RWPE1 (cell line): ENCODE measurements at regions of chr20 and their contacts with region 1.

Region 1: GRCh38 chr20:12925214-12925755 is 83.5 kb upstream of the SPTLC3 start:
- DNase-seq: peak; percentile 86
- H3K27ac ChIP-seq: no peak overlapping the region
- CTCF ChIP-seq: peak; percentile 95

Region 2: DNA sequence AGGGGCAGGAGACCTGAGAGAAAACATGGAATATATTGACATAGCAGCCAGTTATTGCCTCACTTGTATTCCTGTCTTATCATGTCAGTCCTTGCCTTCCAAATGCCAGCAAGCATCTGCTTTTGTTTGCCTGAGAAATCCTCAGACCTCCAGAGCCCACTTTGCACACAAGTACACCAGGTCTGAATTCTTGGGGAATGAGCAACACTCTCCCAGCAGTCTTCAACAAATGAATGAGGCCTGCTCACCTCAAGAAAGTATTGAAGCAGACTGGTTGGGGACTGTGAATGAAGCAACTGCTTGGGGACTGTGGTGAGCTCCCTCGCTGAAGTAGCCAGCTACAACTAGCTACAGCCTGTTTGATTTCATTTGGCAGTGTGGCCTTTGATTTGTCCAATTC is 89.3 kb before region 1 on chr20:
- CTCF ChIA-PET with region 1: no interaction called
- POLR2A ChIA-PET with region 1: no interaction called
- DNase-seq: no peak
- H3K27ac ChIP-seq: no peak overlapping the region
- CTCF ChIP-seq: no peak

Region 3: GRCh38 chr20:12847872-12848271 is 77.4 kb before region 1 on chr20:
- CTCF ChIA-PET with region 1: no interaction called
- POLR2A ChIA-PET with region 1: no interaction called
- DNase-seq: peak; percentile 2
- H3K27ac ChIP-seq: no peak overlapping the region
- CTCF ChIP-seq: no peak

Region 4: GRCh38 chr20:12970372-12970821 is 45.1 kb after region 1 on chr20:
- CTCF ChIA-PET with region 1: interaction called, 12 read pairs
- POLR2A ChIA-PET with region 1: no interaction called
- DNase-seq: peak; percentile 53
- H3K27ac ChIP-seq: no peak overlapping the region
- CTCF ChIP-seq: peak; percentile 74

Region 5: DNA sequence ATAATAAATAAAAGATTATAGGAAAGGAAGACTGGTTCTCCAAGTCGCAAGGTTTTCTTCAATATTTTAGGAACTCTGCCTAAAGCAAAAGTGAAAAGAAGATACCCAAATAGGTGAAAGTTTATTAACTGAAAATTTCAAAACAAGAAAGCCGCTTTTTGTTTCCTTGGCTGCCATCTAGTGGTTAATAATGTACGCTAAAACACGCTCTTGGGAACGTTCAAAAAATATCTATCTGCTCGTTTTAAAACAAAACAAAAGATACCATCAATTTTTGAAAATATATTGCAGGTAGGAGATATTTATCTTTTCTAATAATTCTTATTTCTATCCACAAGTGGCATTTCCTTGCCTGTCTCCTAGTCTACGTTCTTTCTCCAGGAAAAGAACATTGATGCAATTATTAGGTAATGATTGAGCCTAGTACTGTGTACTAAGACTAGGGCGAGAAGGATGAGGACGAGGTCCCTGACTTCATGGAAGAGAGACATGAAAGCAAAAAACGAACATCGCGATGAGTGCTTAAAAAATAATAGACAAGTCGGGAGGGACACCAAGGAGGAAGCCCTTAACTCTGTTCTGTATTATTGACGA is 180.7 kb after region 1 on chr20:
- CTCF ChIA-PET with region 1: interaction called, 12 read pairs
- POLR2A ChIA-PET with region 1: no interaction called
- DNase-seq: peak; percentile 28
- H3K27ac ChIP-seq: no peak overlapping the region
- CTCF ChIP-seq: peak; percentile 83

Region 6: GRCh38 chr20:13771853-13772453 is 846.7 kb after region 1 on chr20:
- CTCF ChIA-PET with region 1: interaction called, 11 read pairs
- POLR2A ChIA-PET with region 1: no interaction called
- DNase-seq: peak; percentile 21
- H3K27ac ChIP-seq: no peak overlapping the region
- CTCF ChIP-seq: peak; percentile 76